IMR-90 (cell line): ENCODE measurements at regions of chr2 and their contacts with region 1.

Region 1: DNA sequence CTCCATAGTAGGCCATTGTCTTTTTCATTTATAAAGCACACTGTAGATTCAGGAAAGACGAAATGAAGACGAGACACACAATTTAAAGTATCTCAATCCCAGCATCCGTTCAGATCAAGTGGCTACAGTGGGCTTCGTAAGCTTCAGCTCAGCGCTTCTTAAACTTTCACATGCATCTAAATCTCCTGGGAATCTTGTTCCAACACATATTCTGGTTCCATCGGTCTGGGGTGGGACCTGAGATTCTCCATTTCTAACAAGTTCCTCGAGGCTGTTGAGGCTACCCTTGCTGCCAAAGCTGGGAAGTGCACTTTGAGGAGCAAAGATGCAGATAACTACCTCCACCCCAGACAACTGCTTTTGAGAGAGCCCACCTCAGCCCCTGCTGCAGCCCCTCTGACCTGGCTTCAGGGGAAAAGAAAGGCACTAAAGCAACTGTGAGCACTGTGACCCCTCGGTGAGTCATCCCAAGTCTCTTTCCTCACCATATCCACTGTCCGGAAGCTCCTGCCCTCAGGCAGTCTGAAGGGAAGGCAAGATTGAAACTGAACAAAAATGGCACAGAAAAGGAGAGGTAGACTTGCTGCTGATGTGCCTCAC is 201.1 kb upstream of the FBXO11 start:
- DNase-seq: peak; percentile 77
- ATAC-seq: no peak
- H3K4me3 ChIP-seq: no peak overlapping the region
- H3K27ac ChIP-seq: peak overlapping the region; percentile 76
- H3K4me1 ChIP-seq: peaks cover 17% of the 10 kb centered on the region
- H3K27me3 ChIP-seq: no peaks in the 10 kb centered on the region
- CTCF ChIP-seq: 0 out of 2 replicates have a peak, but pooled peaks have one; percentile 7
- POLR2A ChIP-seq: no peak
- RAD21 ChIP-seq: no peak

Region 2: DNA sequence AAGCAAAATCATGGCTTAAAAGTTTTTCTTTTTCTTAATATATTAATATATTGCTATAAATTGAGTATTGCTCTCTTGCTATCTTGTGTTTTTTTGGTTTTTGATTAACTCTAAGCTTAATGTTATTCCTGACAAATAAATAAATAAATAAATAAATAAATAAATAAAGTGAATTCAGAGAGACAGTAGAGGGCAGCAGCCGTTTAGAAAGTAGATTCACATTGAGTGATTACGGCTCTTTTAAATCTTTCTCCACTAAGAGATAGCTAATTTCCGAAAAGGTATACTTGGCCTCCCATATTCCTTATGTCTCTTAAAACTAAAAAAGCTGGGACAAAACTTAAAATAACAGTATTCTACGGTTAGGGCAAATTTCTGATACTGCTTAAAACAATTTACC is 670.1 kb before region 1 on chr2:
- CTCF ChIA-PET with region 1: interaction called, 4 read pairs
- POLR2A ChIA-PET with region 1: no interaction called
- dilution Hi-C with region 1: no loop called
- in situ Hi-C with region 1: no loop called
- intact Hi-C with region 1: loop called (anchors 5 kb)
- DNase-seq: peak; percentile 47
- ATAC-seq: peak; percentile 44; the same call in 1 of the 2 replicates
- H3K4me3 ChIP-seq: no peak overlapping the region
- H3K27ac ChIP-seq: no peak overlapping the region
- H3K4me1 ChIP-seq: no peaks in the 10 kb centered on the region
- H3K27me3 ChIP-seq: no peaks in the 10 kb centered on the region
- CTCF ChIP-seq: peak; percentile 52
- POLR2A ChIP-seq: no peak
- RAD21 ChIP-seq: peak; percentile 60

Region 3: GRCh38 chr2:47782671-47783485 is 324.5 kb before region 1 on chr2 and contains the start of gene MSH6:
- CTCF ChIA-PET with region 1: no interaction called
- POLR2A ChIA-PET with region 1: no interaction called
- dilution Hi-C with region 1: no loop called
- in situ Hi-C with region 1: no loop called
- intact Hi-C with region 1: loop called (anchors 5 kb)
- DNase-seq: peak; percentile 82
- ATAC-seq: peak; percentile 95
- H3K4me3 ChIP-seq: peak within 1 kb of the TSS; percentile 94
- H3K27ac ChIP-seq: peak within 1 kb of the TSS; percentile 88
- H3K4me1 ChIP-seq: peaks cover 4% of the 10 kb centered on the region
- H3K27me3 ChIP-seq: no peaks in the 10 kb centered on the region
- CTCF ChIP-seq: no peak
- POLR2A ChIP-seq: peak; percentile 80
- RAD21 ChIP-seq: no peak
- total RNA-seq, gene MSH6: 48.9 and 72.5 TPM in 2 replicates

Region 4: DNA sequence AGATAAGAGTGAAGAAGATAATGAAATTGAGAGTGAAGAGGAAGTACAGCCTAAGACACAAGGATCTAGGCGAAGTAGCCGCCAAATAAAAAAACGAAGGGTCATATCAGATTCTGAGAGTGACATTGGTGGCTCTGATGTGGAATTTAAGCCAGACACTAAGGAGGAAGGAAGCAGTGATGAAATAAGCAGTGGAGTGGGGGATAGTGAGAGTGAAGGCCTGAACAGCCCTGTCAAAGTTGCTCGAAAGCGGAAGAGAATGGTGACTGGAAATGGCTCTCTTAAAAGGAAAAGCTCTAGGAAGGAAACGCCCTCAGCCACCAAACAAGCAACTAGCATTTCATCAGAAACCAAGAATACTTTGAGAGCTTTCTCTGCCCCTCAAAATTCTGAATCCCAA is 308.8 kb before region 1 on chr2:
- CTCF ChIA-PET with region 1: no interaction called
- POLR2A ChIA-PET with region 1: no interaction called
- dilution Hi-C with region 1: no loop called
- in situ Hi-C with region 1: no loop called
- intact Hi-C with region 1: no loop called
- DNase-seq: no peak
- ATAC-seq: no peak
- H3K4me3 ChIP-seq: no peak overlapping the region
- H3K27ac ChIP-seq: no peak overlapping the region
- H3K4me1 ChIP-seq: no peaks in the 10 kb centered on the region
- H3K27me3 ChIP-seq: no peaks in the 10 kb centered on the region
- CTCF ChIP-seq: no peak
- POLR2A ChIP-seq: no peak
- RAD21 ChIP-seq: no peak

Region 5: DNA sequence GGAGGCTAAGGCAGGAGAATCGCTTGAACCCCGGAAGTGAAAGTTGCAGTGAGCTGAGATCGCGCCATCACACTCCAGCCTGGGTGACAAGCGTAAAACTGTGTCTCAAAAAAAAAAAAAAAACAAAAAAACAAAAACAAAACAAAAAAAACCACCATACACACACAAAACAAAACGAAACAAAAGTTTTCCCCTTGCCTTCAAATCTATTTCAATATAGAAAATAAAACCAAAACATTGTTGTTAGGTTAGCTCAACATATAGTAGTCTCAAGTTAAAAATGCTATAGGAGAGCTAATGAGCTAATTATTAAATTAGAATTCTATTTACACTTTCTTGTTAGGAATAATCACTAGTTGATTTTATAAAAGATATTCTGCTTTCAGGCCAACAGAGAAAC is 244.5 kb before region 1 on chr2:
- CTCF ChIA-PET with region 1: no interaction called
- POLR2A ChIA-PET with region 1: no interaction called
- dilution Hi-C with region 1: no loop called
- in situ Hi-C with region 1: loop called (anchors 5 kb)
- intact Hi-C with region 1: loop called (anchors 1 kb)
- DNase-seq: no peak
- ATAC-seq: no peak
- H3K4me3 ChIP-seq: no peak overlapping the region
- H3K27ac ChIP-seq: no peak overlapping the region
- H3K4me1 ChIP-seq: peaks cover 4% of the 10 kb centered on the region; the same call in 1 of the 2 replicates
- H3K27me3 ChIP-seq: no peaks in the 10 kb centered on the region
- CTCF ChIP-seq: no peak
- POLR2A ChIP-seq: no peak
- RAD21 ChIP-seq: no peak

Region 6: GRCh38 chr2:47950340-47951301 is 156.8 kb before region 1 on chr2:
- CTCF ChIA-PET with region 1: no interaction called
- POLR2A ChIA-PET with region 1: no interaction called
- dilution Hi-C with region 1: no loop called
- in situ Hi-C with region 1: no loop called
- intact Hi-C with region 1: no loop called
- DNase-seq: no peak
- ATAC-seq: no peak
- H3K4me3 ChIP-seq: no peak overlapping the region
- H3K27ac ChIP-seq: no peak overlapping the region
- H3K4me1 ChIP-seq: no peaks in the 10 kb centered on the region
- H3K27me3 ChIP-seq: no peaks in the 10 kb centered on the region
- CTCF ChIP-seq: no peak
- POLR2A ChIP-seq: no peak
- RAD21 ChIP-seq: no peak

Region 7: GRCh38 chr2:48048476-48049171 is 58.8 kb before region 1 on chr2:
- CTCF ChIA-PET with region 1: no interaction called
- POLR2A ChIA-PET with region 1: no interaction called
- dilution Hi-C with region 1: no loop called
- in situ Hi-C with region 1: no loop called
- intact Hi-C with region 1: no loop called
- DNase-seq: no peak
- ATAC-seq: no peak
- H3K4me3 ChIP-seq: no peak overlapping the region
- H3K27ac ChIP-seq: no peak overlapping the region
- H3K4me1 ChIP-seq: no peaks in the 10 kb centered on the region
- H3K27me3 ChIP-seq: no peaks in the 10 kb centered on the region
- CTCF ChIP-seq: no peak
- POLR2A ChIP-seq: no peak
- RAD21 ChIP-seq: no peak